ENCODE measurements at regions of chr1 and their contacts with region 1.

Region 1: GRCh38 chr1:23800400-23801337 is at the start of gene GALE:
- DNase-seq: peak; percentile 98
- ATAC-seq: peak; percentile 94
- H3K4me3 ChIP-seq: peak within 1 kb of the TSS; percentile 39 to 99 (median 80)
- H3K4me3 Mint-ChIP-seq: peak within 1 kb of the TSS; percentile 95
- H3K27ac ChIP-seq: peak within 1 kb of the TSS; percentile 79 to 93
- H3K27ac Mint-ChIP-seq: peak within 1 kb of the TSS; percentile 87
- H3K4me1 ChIP-seq: peaks cover 15 to 20% of the 10 kb centered on the region in 2 donors
- H3K4me1 Mint-ChIP-seq: peaks cover 18% of the 10 kb centered on the region
- H3K27me3 ChIP-seq: no peaks in the 10 kb centered on the region
- H3K27me3 Mint-ChIP-seq: no peaks in the 10 kb centered on the region
- CTCF ChIP-seq: no peak
- total RNA-seq, gene GALE: 12.1 TPM in 2 replicates

Region 2: GRCh38 chr1:23484253-23485001 is 316.2 kb before region 1 on chr1:
- CTCF ChIA-PET with region 1: no interaction called
- POLR2A ChIA-PET with region 1: no interaction called
- intact Hi-C with region 1: loop called (anchors 1 kb)
- DNase-seq: peak; percentile 94
- ATAC-seq: peak; percentile 85
- H3K4me3 ChIP-seq: peak overlapping the region in 4 of 5 experiments; percentile 43 to 79 (median 66)
- H3K4me3 Mint-ChIP-seq: peak overlapping the region; percentile 90
- H3K27ac ChIP-seq: no peak overlapping the region
- H3K27ac Mint-ChIP-seq: peak overlapping the region; percentile 82
- H3K4me1 ChIP-seq: peaks cover 14 to 23% of the 10 kb centered on the region in 2 donors
- H3K4me1 Mint-ChIP-seq: peaks cover 29% of the 10 kb centered on the region
- H3K27me3 ChIP-seq: peaks cover 0 to 22% (median 8%) of the 10 kb centered on the region in 4 experiments
- H3K27me3 Mint-ChIP-seq: peaks cover 25% of the 10 kb centered on the region
- CTCF ChIP-seq: peak; percentile 2

Region 3: GRCh38 chr1:23772049-23772853 is 28.4 kb before region 1 on chr1:
- CTCF ChIA-PET with region 1: interaction called, 13 read pairs
- POLR2A ChIA-PET with region 1: no interaction called
- intact Hi-C with region 1: no loop called
- DNase-seq: peak; percentile 86
- ATAC-seq: peak; percentile 100
- H3K4me3 ChIP-seq: no peak overlapping the region
- H3K4me3 Mint-ChIP-seq: no peak overlapping the region
- H3K27ac ChIP-seq: no peak overlapping the region
- H3K27ac Mint-ChIP-seq: no peak overlapping the region
- H3K4me1 ChIP-seq: peaks cover 4 to 5% of the 10 kb centered on the region in 2 donors
- H3K4me1 Mint-ChIP-seq: peaks cover 9% of the 10 kb centered on the region
- H3K27me3 ChIP-seq: no peaks in the 10 kb centered on the region
- H3K27me3 Mint-ChIP-seq: no peaks in the 10 kb centered on the region
- CTCF ChIP-seq: peak; percentile 92

Region 4: GRCh38 chr1:23825076-23825761 is 24.6 kb after region 1 on chr1 and contains the start of gene HMGCL:
- CTCF ChIA-PET with region 1: interaction called, 4 read pairs
- POLR2A ChIA-PET with region 1: interaction called, 3 read pairs
- intact Hi-C with region 1: loop called (anchors 1 kb)
- DNase-seq: peak; percentile 92
- ATAC-seq: peak; percentile 98
- H3K4me3 ChIP-seq: peak within 1 kb of the TSS; percentile 76 to 95 (median 93)
- H3K4me3 Mint-ChIP-seq: peak within 1 kb of the TSS; percentile 96
- H3K27ac ChIP-seq: peak within 1 kb of the TSS; percentile 81 to 97
- H3K27ac Mint-ChIP-seq: peak within 1 kb of the TSS; percentile 98
- H3K4me1 ChIP-seq: peaks cover 10 to 14% of the 10 kb centered on the region in 2 donors
- H3K4me1 Mint-ChIP-seq: peaks cover 22% of the 10 kb centered on the region
- H3K27me3 ChIP-seq: no peaks in the 10 kb centered on the region
- H3K27me3 Mint-ChIP-seq: no peaks in the 10 kb centered on the region
- CTCF ChIP-seq: no peak
- total RNA-seq, gene HMGCL: 35.9 and 41.2 TPM in 2 replicates

Region 5: GRCh38 chr1:23867953-23868556 is 67.4 kb after region 1 on chr1 and contains the start of gene FUCA1:
- CTCF ChIA-PET with region 1: no interaction called
- POLR2A ChIA-PET with region 1: no interaction called
- intact Hi-C with region 1: no loop called
- DNase-seq: peak; percentile 97
- ATAC-seq: peak; percentile 98
- H3K4me3 ChIP-seq: peak within 1 kb of the TSS; percentile 42 to 81 (median 61)
- H3K4me3 Mint-ChIP-seq: peak within 1 kb of the TSS; percentile 93
- H3K27ac ChIP-seq: peak within 1 kb of the TSS in 1 of 2 donors; percentile 73
- H3K27ac Mint-ChIP-seq: peak within 1 kb of the TSS; percentile 91
- H3K4me1 ChIP-seq: peaks cover 18% of the 10 kb centered on the region in 2 donors
- H3K4me1 Mint-ChIP-seq: peaks cover 45% of the 10 kb centered on the region
- H3K27me3 ChIP-seq: no peaks in the 10 kb centered on the region
- H3K27me3 Mint-ChIP-seq: no peaks in the 10 kb centered on the region
- CTCF ChIP-seq: peak; percentile 93
- total RNA-seq, gene FUCA1: 17.4 and 19.3 TPM in 2 replicates

Region 6: DNA sequence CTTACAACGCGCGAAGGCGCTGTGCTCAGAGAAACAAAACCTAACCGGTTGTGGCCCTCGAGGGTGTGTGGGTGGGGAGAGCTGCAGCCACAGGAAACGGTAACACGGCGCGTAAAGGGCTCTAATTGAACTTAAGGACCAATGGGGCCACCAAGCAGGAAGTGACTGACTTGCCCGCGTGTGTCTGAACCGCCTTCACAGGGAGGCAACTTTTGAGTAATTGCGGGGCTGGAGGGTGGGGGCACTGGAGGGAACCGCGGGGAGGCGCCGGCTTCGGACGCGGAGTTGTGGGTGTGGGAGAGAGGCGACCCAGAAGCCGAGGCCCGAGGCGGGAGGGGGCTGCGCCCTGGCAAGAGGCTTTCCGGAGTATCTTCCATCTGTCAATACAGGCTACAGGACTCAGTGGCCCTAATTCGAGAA is 158.4 kb after region 1 on chr1:
- CTCF ChIA-PET with region 1: no interaction called
- POLR2A ChIA-PET with region 1: no interaction called
- intact Hi-C with region 1: loop called (anchors 2 kb)
- DNase-seq: peak; percentile 97
- ATAC-seq: peak; percentile 73
- H3K4me3 ChIP-seq: peak overlapping the region; percentile 63 to 98 (median 97)
- H3K4me3 Mint-ChIP-seq: peak overlapping the region; percentile 100
- H3K27ac ChIP-seq: peak overlapping the region; percentile 93 to 98
- H3K27ac Mint-ChIP-seq: peak overlapping the region; percentile 100
- H3K4me1 ChIP-seq: peaks cover 51 to 57% of the 10 kb centered on the region in 2 donors
- H3K4me1 Mint-ChIP-seq: peaks cover 70% of the 10 kb centered on the region
- H3K27me3 ChIP-seq: no peaks in the 10 kb centered on the region
- H3K27me3 Mint-ChIP-seq: no peaks in the 10 kb centered on the region
- CTCF ChIP-seq: peak; percentile 1

Measured in B cell (primary cell).